Heart right ventricle (tissue), 16 donors: ENCODE measurements at regions of chr9 and their contacts with region 1.

Region 1: GRCh38 chr9:6757456-6758247 is at the start of gene KDM4C:
- DNase-seq: peak; percentile 93 to 95
- ATAC-seq: peak; percentile 93 to 97 (median 97)
- H3K4me3 ChIP-seq: peak within 1 kb of the TSS; percentile 80 to 98 (median 94)
- H3K27ac ChIP-seq: peak within 1 kb of the TSS; percentile 86 to 99 (median 94)
- H3K4me1 ChIP-seq: peaks cover 0 to 24% (median 13%) of the 10 kb centered on the region in 9 donors
- H3K27me3 ChIP-seq: no peaks in the 10 kb centered on the region
- CTCF ChIP-seq: no peak
- total RNA-seq, gene KDM4C: 12.2 to 18.2 (median 14.9) TPM

Region 2: DNA sequence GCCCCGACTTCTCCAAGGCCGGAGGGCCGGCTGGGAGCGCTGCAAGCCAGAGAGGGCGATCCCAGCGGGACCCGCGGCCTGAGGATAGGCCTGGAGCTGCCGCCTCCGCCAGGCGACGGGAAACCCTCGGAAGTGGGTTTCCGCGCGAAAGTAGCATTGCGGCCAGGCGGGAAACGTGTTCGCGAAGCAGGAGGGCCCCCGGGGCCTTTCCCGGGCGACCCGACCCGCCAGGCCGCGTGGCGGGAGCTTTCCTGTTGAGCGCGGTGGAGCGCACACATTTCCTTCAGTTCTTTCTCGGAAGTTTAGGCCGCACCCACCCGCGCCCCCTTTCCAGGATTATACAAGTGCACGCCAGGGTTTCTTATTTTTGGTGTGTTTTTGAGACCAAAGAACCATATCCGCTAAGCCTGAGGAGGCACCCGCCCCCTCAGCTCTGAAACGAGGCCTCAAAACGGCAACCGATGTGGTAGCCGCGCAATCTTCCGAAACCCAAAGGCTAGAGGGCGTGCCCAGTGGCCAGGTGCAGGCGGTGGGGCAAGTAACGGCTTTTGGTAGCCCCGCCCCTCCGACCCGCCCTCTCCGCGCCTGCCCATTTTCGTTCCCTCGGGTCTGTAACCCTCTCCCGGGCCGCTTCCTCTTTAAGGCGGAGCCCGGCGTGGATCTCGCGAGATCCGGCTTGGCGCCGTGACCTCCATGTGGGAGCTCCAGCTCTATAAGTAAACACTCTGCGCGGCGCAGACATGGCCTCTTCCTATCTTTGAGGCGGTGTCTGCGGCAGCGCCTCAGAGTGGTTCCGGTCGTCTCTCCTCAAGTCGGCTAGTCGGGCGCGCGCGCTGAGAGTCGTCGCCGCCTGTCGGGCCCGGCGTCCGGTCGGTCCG is 344.9 kb before region 1 on chr9 and contains the start of gene UHRF2:
- intact Hi-C with region 1: loop called in 3 of 10 experiments (anchors 5 to 10 kb)
- DNase-seq: peak; percentile 99
- ATAC-seq: peak; percentile 98 to 99 (median 98)
- H3K4me3 ChIP-seq: peak within 1 kb of the TSS; percentile 44 to 99 (median 94)
- H3K27ac ChIP-seq: peak within 1 kb of the TSS; percentile 67 to 97 (median 89)
- H3K4me1 ChIP-seq: peaks cover 3 to 38% (median 22%) of the 10 kb centered on the region in 9 donors
- H3K27me3 ChIP-seq: peaks cover 0 to under 1% (median 0%) of the 10 kb centered on the region in 7 donors
- CTCF ChIP-seq: peak in 3 of 9 donors; percentile 4 to 7 (median 5)
- total RNA-seq, gene UHRF2: 11.2 to 19.7 (median 13.1) TPM

Region 3: DNA sequence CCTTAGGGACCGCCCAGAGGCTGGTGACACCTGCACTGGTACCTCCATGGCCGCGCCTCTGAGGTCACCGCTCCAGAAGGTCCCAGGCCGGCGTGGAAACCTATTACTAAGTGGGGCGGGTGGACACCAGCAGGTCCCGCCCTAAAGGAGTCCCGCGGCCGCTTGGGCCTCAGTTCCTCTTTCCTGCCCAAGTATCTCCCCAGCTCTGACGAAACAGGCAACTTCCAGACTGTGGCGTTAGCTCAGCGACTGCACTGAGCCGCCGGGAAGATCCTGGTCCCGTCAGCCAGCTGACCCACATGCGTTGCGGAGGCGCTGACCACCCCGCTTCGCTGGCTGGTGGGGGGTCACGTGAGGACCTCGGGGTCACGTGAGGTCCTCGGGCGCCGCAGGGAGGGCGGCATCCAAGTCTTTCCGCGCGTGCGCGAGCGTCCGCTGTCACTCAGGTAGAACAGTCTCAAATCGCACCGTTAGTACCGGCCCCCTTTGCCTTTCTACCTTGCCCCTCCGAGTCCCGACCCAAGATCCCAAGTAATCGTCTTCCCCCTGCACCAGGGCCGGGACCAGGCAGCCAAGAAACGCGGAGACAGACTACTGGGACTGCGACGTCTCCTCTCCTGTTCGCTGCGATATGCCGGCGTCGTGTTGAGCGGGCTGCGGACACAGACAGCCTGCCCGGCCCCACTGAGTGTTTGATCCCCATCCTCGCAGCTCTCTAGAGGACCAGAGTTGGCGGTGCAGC is 53.6 kb before region 1 on chr9:
- intact Hi-C with region 1: loop called in 1 of 10 experiments (anchors 2 kb)
- DNase-seq: peak; percentile 80 to 88
- ATAC-seq: peak; percentile 93 to 98 (median 97)
- H3K4me3 ChIP-seq: peak overlapping the region; percentile 31 to 75 (median 64)
- H3K27ac ChIP-seq: peak overlapping the region in 9 of 10 donors; percentile 56 to 84 (median 79)
- H3K4me1 ChIP-seq: peaks cover 0 to 10% (median 5%) of the 10 kb centered on the region in 9 donors
- H3K27me3 ChIP-seq: no peaks in the 10 kb centered on the region
- CTCF ChIP-seq: no peak

Region 4: GRCh38 chr9:6794936-6795335 is 37.3 kb after region 1 on chr9:
- intact Hi-C with region 1: no loop called
- DNase-seq: no peak
- ATAC-seq: peak in 5 of 8 donors; percentile 34 to 68 (median 59)
- H3K4me3 ChIP-seq: no peak overlapping the region
- H3K27ac ChIP-seq: no peak overlapping the region
- H3K4me1 ChIP-seq: peaks cover 0 to 9% (median 0%) of the 10 kb centered on the region in 9 donors
- H3K27me3 ChIP-seq: no peaks in the 10 kb centered on the region
- CTCF ChIP-seq: no peak

Region 5: GRCh38 chr9:6805532-6805931 is 47.9 kb after region 1 on chr9:
- intact Hi-C with region 1: no loop called
- DNase-seq: peak in 1 of 2 donors; percentile 50
- ATAC-seq: peak in 5 of 8 donors; percentile 45 to 59 (median 57)
- H3K4me3 ChIP-seq: no peak overlapping the region
- H3K27ac ChIP-seq: peak overlapping the region in 1 of 10 donors; percentile 7
- H3K4me1 ChIP-seq: peaks cover 0 to 11% (median 4%) of the 10 kb centered on the region in 9 donors
- H3K27me3 ChIP-seq: no peaks in the 10 kb centered on the region
- CTCF ChIP-seq: no peak